Activated CD8-positive, alpha-beta memory T cell treated with anti-CD3 and anti-CD28 coated beads, Interleukin-2, amount 10 ng/mL, durations not matched to agents 7 days and 5 days (primary cell): ENCODE measurements at regions of chr19 and their contacts with region 1.

Region 1: DNA sequence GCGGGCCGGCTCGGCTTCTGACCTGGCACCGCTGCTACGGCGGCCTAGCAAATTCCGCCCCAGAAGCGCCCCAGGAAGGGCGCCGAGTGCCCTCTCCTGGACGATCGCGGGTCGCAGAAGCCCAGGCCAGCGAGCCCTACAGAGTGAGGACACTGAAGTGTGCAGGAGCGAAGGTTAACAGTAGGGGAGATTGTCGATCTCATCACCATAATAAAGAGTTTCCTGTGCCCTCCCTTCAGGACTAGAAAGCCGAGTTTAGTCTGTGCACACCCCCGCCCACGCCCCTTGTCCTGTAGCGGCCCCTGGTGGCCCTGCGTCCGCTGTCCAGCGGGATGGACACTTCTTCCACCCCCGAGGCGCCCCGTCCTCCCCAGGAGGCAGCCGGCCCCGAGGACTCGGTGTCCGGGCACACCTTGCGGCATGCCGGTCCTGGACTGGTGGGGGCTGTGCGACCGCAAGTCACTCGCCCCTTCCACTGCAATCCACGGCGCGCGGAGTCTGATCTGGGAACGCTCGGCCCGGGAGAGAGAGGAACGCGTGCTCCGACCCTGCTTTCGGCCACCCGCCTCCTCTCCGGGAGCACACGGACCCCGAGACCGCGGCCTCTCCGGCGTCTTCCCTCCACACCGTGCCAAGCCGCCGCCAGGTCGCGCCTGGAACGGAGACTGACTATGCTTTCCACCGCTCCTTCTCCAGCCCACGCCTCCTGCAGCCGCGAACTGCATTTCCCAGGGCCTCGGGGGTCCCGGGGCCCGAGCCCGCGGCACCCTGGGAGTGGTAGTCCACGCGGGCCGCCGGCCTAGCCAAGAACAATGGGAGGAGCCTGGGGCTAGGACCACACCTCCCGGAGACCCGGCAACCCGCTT is 769 bp upstream of the KMT2B start:
- DNase-seq: peak; percentile 98
- ATAC-seq: peak; percentile 68
- H3K4me3 Mint-ChIP-seq: peak overlapping the region; percentile 89
- H3K27ac Mint-ChIP-seq: peak overlapping the region; percentile 96
- H3K4me1 Mint-ChIP-seq: peaks cover 39% of the 10 kb centered on the region
- H3K27me3 Mint-ChIP-seq: no peaks in the 10 kb centered on the region

Region 2: GRCh38 chr19:35449053-35449687 is 267.9 kb before region 1 on chr19:
- CTCF ChIA-PET with region 1: no interaction called
- DNase-seq: no peak
- ATAC-seq: no peak
- H3K4me3 Mint-ChIP-seq: no peak overlapping the region
- H3K27ac Mint-ChIP-seq: no peak overlapping the region
- H3K4me1 Mint-ChIP-seq: peaks cover 60% of the 10 kb centered on the region
- H3K27me3 Mint-ChIP-seq: peaks cover 35% of the 10 kb centered on the region

Region 3: DNA sequence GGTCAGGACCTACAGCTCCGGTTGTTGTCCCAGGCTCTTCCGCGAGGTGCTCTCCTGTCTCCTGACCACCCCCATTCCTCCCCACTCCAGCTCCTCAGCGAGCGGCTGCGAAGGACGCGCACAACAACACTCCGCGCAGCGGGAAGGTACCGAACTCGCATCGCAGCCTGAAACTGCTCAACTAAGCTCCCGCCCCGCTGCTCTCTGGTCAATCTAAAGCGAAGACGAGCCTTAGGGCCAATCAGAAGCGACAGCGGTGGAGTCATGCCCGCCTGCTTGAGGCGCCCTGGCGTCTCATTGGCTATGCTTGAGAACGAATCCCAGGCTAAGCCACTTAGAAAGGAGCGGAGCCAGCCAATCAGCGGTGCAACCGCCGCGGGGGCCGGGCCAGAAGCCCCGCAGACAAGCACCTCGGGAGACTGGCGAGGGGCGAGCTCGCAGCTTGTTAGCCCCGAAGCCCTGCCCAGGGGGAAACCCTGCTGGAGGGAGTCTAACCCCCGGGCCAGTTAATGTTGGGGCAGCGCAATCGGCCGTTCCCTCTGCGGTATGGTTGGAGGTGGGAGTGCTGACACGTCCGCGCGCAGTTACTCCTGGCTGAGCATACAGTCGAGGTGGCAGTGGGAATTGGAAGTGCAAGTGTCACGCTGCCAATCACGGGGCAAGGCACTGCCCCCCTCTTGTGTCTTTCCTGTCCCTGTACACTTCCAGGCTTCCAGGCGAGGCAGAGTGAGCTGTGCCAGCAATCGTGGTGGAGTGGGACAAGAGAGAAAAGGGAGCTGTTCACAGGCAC is 14.6 kb before region 1 on chr19:
- CTCF ChIA-PET with region 1: interaction called, 254 read pairs
- DNase-seq: peak; percentile 98
- ATAC-seq: peak; percentile 100
- H3K4me3 Mint-ChIP-seq: peak overlapping the region; percentile 97
- H3K27ac Mint-ChIP-seq: peak overlapping the region; percentile 98
- H3K4me1 Mint-ChIP-seq: peaks cover 13% of the 10 kb centered on the region
- H3K27me3 Mint-ChIP-seq: no peaks in the 10 kb centered on the region